ENCODE measurements at regions of chr3 and their contacts with region 1.

Region 1: GRCh38 chr3:56988458-56989168 is 71.9 kb upstream of the SPATA12 start:
- DNase-seq: peak; percentile 70 to 79 (median 71)
- H3K4me3 ChIP-seq: no peak overlapping the region
- H3K27ac ChIP-seq: no peak overlapping the region
- H3K4me1 ChIP-seq: peaks cover 0 to 21% (median 12%) of the 10 kb centered on the region in 4 experiments
- H3K27me3 ChIP-seq: no peaks in the 10 kb centered on the region

Region 2: DNA sequence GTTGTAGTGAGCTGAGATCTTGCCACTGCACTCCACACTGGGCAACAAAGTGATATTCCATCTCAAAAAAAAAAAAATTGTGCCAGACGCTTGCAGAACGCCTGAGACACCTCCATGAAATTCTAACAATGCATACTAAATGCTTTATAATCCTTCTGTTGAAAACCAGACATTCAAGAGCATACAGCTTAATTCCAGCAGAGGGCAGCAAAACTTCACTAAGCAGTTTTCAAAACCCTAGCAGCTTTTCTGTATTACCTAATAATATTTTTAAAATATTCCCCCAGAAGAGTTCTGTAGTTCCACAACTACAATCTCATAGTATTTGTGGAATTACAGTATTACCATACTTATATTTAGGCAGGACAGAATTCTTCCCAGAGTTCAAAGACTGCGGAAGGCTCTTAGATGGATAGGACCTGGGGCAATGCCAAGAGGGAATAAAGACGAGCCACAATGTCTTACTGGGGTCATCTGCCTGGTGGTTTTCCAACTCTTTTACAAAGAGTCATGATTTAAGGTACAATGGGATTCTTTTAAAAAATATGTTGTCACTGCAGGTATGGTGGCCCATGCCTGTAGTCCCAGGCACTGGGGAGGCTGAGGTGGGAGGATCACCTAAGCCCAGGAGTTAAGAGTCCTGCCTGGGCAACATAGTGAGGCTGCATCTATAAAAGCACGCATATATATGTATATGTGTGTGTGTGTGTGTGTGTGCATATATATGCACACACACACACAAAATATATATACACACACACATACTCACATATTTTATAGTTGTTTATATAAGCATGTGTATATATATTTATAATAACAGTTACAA is 285.9 kb before region 1 on chr3:
- CTCF ChIA-PET with region 1: interaction called, 170 read pairs
- POLR2A ChIA-PET with region 1: interaction called, 12 read pairs
- DNase-seq: peak; percentile 76 to 90 (median 80)
- H3K4me3 ChIP-seq: no peak overlapping the region
- H3K27ac ChIP-seq: no peak overlapping the region
- H3K4me1 ChIP-seq: no peaks in the 10 kb centered on the region
- H3K27me3 ChIP-seq: no peaks in the 10 kb centered on the region

Region 3: DNA sequence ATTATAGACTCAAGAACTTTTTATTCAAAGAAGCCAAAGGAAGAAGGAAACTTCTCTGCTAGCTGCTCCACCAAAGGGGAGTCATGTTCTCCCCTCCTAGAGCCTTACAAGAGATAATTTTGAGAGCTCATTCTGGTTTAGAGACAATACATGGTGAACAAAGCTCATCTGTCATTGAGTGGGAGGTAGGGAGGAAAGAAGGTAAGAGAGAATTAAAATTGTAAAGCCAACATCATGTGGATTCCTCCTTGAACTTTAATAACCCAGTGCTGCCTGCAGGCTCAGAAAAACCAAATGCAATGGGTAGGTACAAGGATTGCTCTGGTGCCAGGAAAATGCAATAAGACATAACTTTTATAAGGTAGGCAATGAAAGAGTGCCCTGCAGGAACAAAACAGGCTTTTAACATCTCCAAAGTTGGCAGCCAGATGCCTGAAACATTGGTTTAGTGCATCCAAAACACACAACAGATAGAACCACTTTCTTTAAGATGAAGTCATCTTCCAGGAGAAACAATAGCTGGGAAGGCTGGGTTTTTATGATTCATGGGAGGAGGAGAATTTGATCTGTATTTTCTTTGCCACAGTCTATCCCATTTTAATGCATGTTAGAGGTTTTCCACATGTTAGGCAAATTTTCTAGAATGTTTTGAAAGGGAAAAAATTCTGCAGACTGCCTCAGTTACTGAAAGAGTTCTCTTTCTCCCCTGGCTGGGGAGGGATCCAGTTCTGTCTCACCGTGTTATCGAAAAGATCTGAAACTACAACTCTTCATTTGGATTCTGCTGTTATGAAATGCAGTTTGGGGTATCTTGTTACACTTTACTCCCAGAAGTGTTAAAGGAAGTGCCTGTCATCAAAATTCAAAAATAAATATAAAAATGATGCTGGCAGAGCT is 175.6 kb before region 1 on chr3:
- CTCF ChIA-PET with region 1: interaction called, 17 read pairs
- POLR2A ChIA-PET with region 1: no interaction called
- DNase-seq: no peak
- H3K4me3 ChIP-seq: peak overlapping the region in 2 of 7 experiments; percentile 10 to 21
- H3K27ac ChIP-seq: peak overlapping the region in 1 of 2 experiments; percentile 16
- H3K4me1 ChIP-seq: peaks cover 16 to 42% (median 30%) of the 10 kb centered on the region in 4 experiments
- H3K27me3 ChIP-seq: no peaks in the 10 kb centered on the region

Region 4: GRCh38 chr3:56915966-56916586 is 72.5 kb before region 1 on chr3:
- CTCF ChIA-PET with region 1: interaction called, 15 read pairs
- POLR2A ChIA-PET with region 1: no interaction called
- DNase-seq: peak in 2 of 3 donors; percentile 77 to 86
- H3K4me3 ChIP-seq: peak overlapping the region in 6 of 7 experiments; percentile 59 to 83 (median 72)
- H3K27ac ChIP-seq: peak overlapping the region; percentile 9 to 60
- H3K4me1 ChIP-seq: peaks cover 10 to 55% (median 23%) of the 10 kb centered on the region in 4 experiments
- H3K27me3 ChIP-seq: no peaks in the 10 kb centered on the region

Region 5: DNA sequence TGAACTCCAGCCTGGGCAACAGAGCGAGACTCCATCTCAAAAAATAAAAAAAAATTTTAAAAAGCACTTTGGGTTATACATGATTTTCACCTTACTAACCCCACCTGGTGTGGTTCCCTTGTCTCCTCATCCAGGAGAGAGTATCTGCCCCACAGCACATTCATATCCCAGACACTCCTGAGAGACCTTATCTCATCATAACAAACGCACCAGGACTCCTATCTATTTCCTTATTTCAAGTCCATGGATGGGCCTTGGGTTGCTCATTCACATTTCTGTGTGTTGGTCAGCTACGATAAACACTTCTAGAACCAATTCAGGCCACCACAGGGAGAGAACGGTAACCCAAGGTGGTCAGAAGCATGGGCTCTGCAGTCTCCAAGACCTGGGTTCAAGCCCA is 16.8 kb before region 1 on chr3:
- CTCF ChIA-PET with region 1: interaction called, 11 read pairs
- POLR2A ChIA-PET with region 1: no interaction called
- DNase-seq: no peak
- H3K4me3 ChIP-seq: no peak overlapping the region
- H3K27ac ChIP-seq: no peak overlapping the region
- H3K4me1 ChIP-seq: peaks cover 2 to 17% (median 5%) of the 10 kb centered on the region in 4 experiments
- H3K27me3 ChIP-seq: no peaks in the 10 kb centered on the region

Measured in common myeloid progenitor, CD34-positive (primary cell).